Heart left ventricle (tissue), 16 donors: ENCODE measurements at regions of chr22 and their contacts with region 1.

Region 1: GRCh38 chr22:42270512-42271417 is at the start of gene TCF20:
- DNase-seq: peak; percentile 78 to 89 (median 85)
- ATAC-seq: peak; percentile 74 to 83 (median 83)
- H3K4me3 ChIP-seq: peak within 1 kb of the TSS; percentile 83 to 99 (median 98)
- H3K27ac ChIP-seq: peak within 1 kb of the TSS; percentile 43 to 89 (median 84)
- H3K4me1 ChIP-seq: peaks cover 2 to 40% (median 14%) of the 10 kb centered on the region in 12 donors
- H3K27me3 ChIP-seq: no peaks in the 10 kb centered on the region
- CTCF ChIP-seq: no peak
- POLR2A ChIP-seq: no peak
- total RNA-seq, gene TCF20: 12.1 to 25.7 (median 15.8) TPM

Region 2: DNA sequence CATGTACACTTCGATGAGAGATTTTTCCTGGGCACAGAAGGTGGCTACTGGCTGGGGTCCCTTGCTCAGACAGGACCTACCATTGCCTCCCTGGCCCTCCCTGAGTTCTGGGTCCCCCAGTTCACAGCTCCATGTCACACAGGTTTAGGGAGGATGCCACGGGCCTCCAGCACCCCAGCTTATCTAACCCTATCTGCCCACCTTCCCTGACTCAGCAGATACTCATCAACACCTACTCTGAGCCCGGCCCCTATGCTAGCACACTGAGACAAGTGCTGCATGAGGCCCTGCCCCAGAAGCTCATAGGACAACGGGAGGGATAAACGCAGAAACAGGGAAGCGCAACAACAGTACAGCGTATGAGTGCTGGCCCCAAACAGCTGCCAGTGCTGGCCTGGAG is 209.7 kb before region 1 on chr22:
- intact Hi-C with region 1: no loop called
- DNase-seq: no peak
- ATAC-seq: no peak
- H3K4me3 ChIP-seq: no peak overlapping the region
- H3K27ac ChIP-seq: no peak overlapping the region
- H3K4me1 ChIP-seq: no peaks in the 10 kb centered on the region
- H3K27me3 ChIP-seq: no peaks in the 10 kb centered on the region
- CTCF ChIP-seq: no peak
- POLR2A ChIP-seq: no peak

Region 3: DNA sequence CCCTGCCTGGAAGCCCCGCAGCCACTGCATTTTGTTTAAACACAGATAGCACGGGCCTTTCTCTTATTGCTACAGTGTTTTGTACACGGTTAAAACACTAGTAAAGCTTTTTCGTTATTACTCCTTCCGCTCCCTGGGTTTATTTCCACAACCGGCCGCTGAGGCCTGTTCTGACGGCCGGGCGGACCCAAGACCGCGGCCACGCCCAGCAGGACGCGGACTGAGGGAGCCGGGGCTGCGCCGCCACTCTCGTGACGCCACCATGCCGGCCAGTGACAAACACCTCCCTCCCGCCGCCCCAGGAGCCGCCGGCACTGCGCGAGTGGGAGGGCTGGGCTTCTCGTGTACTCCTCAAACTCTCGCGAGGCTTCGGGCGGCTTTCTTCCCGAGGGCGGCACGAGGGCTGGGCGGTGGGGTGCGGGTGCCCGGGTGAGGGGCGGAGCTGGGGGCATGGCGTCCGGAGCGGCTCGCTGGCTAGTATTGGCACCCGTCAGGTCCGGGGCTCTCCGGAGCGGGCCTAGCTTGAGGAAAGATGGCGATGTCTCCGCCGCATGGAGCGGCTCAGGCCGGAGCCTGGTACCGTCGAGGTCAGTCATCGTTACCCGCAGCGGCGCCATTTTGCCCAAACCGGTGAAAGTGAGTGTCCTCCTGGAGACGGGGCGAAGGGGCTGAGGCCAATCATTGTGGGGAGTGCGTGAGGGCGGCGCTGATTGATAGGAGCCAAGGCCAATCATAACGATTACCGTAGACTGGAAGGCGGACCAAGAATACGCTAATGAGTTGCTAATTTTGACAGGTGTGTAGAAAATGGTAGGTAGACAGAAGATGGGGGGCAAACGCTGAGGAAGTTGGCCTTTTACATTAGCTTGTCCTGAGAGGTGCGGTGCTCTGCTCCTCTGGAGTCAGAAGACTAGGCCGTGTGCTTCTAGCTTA is 191.2 kb before region 1 on chr22 and contains the start of gene SMDT1:
- intact Hi-C with region 1: loop called in 1 of 10 experiments (anchors 10 kb)
- DNase-seq: peak; percentile 100
- ATAC-seq: peak; percentile 91 to 95 (median 93)
- H3K4me3 ChIP-seq: peak within 1 kb of the TSS; percentile 43 to 82 (median 70)
- H3K27ac ChIP-seq: peak within 1 kb of the TSS; percentile 95 to 99 (median 98)
- H3K4me1 ChIP-seq: peaks cover 2 to 57% (median 33%) of the 10 kb centered on the region in 12 donors
- H3K27me3 ChIP-seq: no peaks in the 10 kb centered on the region
- CTCF ChIP-seq: no peak
- POLR2A ChIP-seq: peak; percentile 52 to 96
- total RNA-seq, gene SMDT1: 15.3 to 179 (median 115) TPM

Region 4: GRCh38 chr22:42169055-42169469 is 101.7 kb before region 1 on chr22:
- intact Hi-C with region 1: loop called in 2 of 10 experiments (anchors 5 to 10 kb)
- DNase-seq: peak; percentile 44 to 75 (median 68)
- ATAC-seq: peak in 3 of 4 donors; percentile 78 to 84 (median 84)
- H3K4me3 ChIP-seq: no peak overlapping the region
- H3K27ac ChIP-seq: no peak overlapping the region
- H3K4me1 ChIP-seq: peaks cover 0 to 15% (median 0%) of the 10 kb centered on the region in 12 donors
- H3K27me3 ChIP-seq: no peaks in the 10 kb centered on the region
- CTCF ChIP-seq: peak; percentile 70 to 98 (median 84)
- POLR2A ChIP-seq: no peak

Region 5: DNA sequence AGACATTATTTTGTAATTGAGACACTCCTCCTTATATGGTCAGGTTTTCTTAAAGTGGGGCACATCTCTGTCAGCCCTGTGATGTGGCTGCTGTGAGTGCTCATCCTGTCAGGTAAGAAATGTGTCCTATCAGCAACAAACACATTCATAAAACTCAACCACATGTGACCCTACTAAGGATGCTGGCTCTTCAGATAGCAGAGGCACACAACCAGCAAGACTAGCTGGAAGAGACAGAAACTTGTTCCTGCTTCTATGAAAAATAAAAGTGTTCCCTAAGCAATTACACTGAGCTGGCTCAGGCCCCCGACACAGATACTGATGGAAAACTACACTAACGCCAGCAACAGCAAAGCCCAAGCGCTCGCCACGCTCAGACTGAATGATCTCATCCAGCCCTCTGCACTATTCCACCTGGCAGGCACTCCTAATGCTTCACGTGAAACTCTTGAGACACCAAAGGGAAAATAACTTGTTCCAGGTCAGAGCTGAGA is 90.4 kb before region 1 on chr22:
- intact Hi-C with region 1: loop called in 3 of 10 experiments (anchors 10 kb)
- DNase-seq: peak in 1 of 5 donors; percentile 43
- ATAC-seq: peak in 3 of 4 donors; percentile 58 to 76 (median 72)
- H3K4me3 ChIP-seq: no peak overlapping the region
- H3K27ac ChIP-seq: peak overlapping the region in 2 of 12 donors; percentile 26 to 50
- H3K4me1 ChIP-seq: peaks cover 0 to 14% (median 8%) of the 10 kb centered on the region in 12 donors
- H3K27me3 ChIP-seq: no peaks in the 10 kb centered on the region
- CTCF ChIP-seq: no peak
- POLR2A ChIP-seq: no peak

Region 6: GRCh38 chr22:42190274-42190673 is 80.5 kb before region 1 on chr22:
- intact Hi-C with region 1: loop called in 3 of 10 experiments (anchors 10 kb)
- DNase-seq: no peak
- ATAC-seq: no peak
- H3K4me3 ChIP-seq: no peak overlapping the region
- H3K27ac ChIP-seq: no peak overlapping the region
- H3K4me1 ChIP-seq: peaks cover 0 to 9% (median 0%) of the 10 kb centered on the region in 12 donors
- H3K27me3 ChIP-seq: no peaks in the 10 kb centered on the region
- CTCF ChIP-seq: no peak
- POLR2A ChIP-seq: no peak

Region 7: DNA sequence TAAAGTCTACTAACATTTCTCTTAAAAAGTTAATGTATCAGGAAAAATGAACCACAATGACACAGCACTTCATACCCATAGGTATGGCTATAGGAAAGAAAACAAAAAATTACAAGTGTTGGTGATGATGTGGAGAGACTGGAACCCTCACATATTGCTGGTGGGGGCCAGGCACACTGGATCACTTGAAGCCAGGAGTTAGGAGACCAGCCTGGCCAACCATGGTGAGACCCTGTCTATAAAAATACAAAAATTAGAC is 27.0 kb before region 1 on chr22:
- intact Hi-C with region 1: no loop called
- DNase-seq: no peak
- ATAC-seq: no peak
- H3K4me3 ChIP-seq: no peak overlapping the region
- H3K27ac ChIP-seq: no peak overlapping the region
- H3K4me1 ChIP-seq: peaks cover 0 to 1% (median 0%) of the 10 kb centered on the region in 12 donors
- H3K27me3 ChIP-seq: no peaks in the 10 kb centered on the region
- CTCF ChIP-seq: no peak
- POLR2A ChIP-seq: no peak

Region 8: DNA sequence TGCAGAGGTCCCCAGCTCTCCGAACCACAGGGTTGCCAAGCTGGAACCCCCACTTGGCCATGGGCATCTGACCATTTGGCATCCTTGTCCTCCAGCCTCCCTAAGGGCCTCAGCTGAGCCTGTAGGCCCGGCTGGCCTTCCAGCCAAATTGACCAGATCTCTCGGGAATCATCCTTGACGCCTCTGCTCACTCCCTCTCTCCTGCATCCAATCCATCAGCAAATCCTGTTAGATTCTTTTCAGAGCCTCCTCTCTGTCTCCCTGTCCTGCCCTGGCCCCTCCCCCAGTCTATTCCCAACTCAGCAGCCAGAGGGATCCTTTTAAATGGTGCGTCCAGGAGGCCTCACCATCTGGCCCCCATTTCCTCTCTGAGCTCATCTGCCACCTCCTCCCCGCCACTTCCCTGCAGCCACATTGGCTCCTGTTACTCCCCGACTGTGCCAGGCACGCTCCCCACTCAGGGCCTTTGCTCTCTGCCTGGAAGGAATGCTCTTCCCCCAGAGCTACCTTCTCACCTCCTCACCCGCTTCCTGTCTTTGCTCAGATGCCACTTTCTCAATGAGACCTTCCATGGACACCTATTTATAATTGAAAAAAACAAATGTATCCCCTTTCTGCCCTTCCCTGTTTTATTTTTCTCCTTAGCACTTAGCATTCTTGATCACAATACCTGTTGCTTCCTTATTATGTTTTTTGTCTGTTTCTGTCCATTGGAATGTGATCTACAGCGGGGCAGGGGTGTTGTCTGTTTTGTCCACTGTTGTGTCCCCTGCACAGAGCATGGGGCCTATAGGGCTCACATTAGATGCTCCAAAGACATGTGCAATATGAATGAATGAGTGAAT is 83.3 kb after region 1 on chr22:
- intact Hi-C with region 1: no loop called
- DNase-seq: no peak
- ATAC-seq: peak in 3 of 4 donors; percentile 19 to 35 (median 27)
- H3K4me3 ChIP-seq: no peak overlapping the region
- H3K27ac ChIP-seq: no peak overlapping the region
- H3K4me1 ChIP-seq: no peaks in the 10 kb centered on the region
- H3K27me3 ChIP-seq: no peaks in the 10 kb centered on the region
- CTCF ChIP-seq: peak in 1 of 12 donors; percentile 8
- POLR2A ChIP-seq: no peak

Region 9: GRCh38 chr22:42437488-42438292 is 166.9 kb after region 1 on chr22:
- intact Hi-C with region 1: loop called in 5 of 10 experiments (anchors 5 to 10 kb)
- DNase-seq: peak; percentile 72 to 90 (median 78)
- ATAC-seq: peak; percentile 72 to 85 (median 84)
- H3K4me3 ChIP-seq: peak overlapping the region in 11 of 12 donors; percentile 3 to 57 (median 49)
- H3K27ac ChIP-seq: peak overlapping the region in 2 of 12 donors; percentile 12 to 66
- H3K4me1 ChIP-seq: peaks cover 0 to 76% (median 16%) of the 10 kb centered on the region in 12 donors
- H3K27me3 ChIP-seq: peaks cover 0 to 25% (median 3%) of the 10 kb centered on the region in 9 donors
- CTCF ChIP-seq: peak; percentile 86 to 98 (median 96)
- POLR2A ChIP-seq: no peak

Region 10: GRCh38 chr22:42444077-42444904 is 173.5 kb after region 1 on chr22:
- intact Hi-C with region 1: loop called in 5 of 10 experiments (anchors 5 to 10 kb)
- DNase-seq: peak; percentile 77 to 88 (median 82)
- ATAC-seq: peak; percentile 53 to 85 (median 83)
- H3K4me3 ChIP-seq: peak overlapping the region in 11 of 12 donors; percentile 12 to 55 (median 47)
- H3K27ac ChIP-seq: peak overlapping the region in 10 of 12 donors; percentile 59 to 84 (median 67)
- H3K4me1 ChIP-seq: peaks cover 0 to 40% (median 21%) of the 10 kb centered on the region in 12 donors
- H3K27me3 ChIP-seq: peaks cover 0 to 4% (median 0%) of the 10 kb centered on the region in 9 donors
- CTCF ChIP-seq: peak; percentile 44 to 72 (median 60)
- POLR2A ChIP-seq: no peak